Tibial artery (tissue), 4 donors: ENCODE measurements at regions of chr5 and their contacts with region 1.

Region 1: GRCh38 chr5:89673019-89673418 is 736.5 kb downstream of the CETN3 start:
- DNase-seq: no peak
- H3K4me3 ChIP-seq: no peak overlapping the region
- H3K27ac ChIP-seq: no peak overlapping the region
- H3K4me1 ChIP-seq: peaks cover 0 to 6% (median 0%) of the 10 kb centered on the region in 4 donors
- H3K27me3 ChIP-seq: no peaks in the 10 kb centered on the region
- CTCF ChIP-seq: no peak

Region 2: DNA sequence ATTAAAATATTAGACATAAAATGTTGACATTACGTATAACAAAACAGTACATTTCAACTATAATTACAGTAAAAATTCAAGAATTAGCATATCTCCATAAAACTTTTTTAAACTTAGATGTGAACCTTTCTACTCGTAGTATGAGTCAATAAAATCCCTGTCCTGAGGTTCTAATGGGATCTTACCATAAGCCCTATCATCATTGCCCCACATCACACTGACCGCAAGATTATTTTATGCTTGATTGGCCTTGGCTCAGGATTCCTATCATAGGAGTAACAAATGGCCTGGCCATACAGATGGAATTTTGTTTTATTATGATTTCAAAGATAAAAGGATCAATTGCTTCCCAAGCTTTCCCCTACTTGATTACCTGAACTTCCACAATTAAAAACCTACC is 1028.3 kb before region 1 on chr5:
- intact Hi-C with region 1: no loop called
- DNase-seq: no peak
- H3K4me3 ChIP-seq: no peak overlapping the region
- H3K27ac ChIP-seq: no peak overlapping the region
- H3K4me1 ChIP-seq: no peaks in the 10 kb centered on the region
- H3K27me3 ChIP-seq: no peaks in the 10 kb centered on the region
- CTCF ChIP-seq: no peak

Region 3: GRCh38 chr5:91245871-91246270 is 1572.9 kb after region 1 on chr5:
- intact Hi-C with region 1: loop called (anchors 5 kb)
- DNase-seq: no peak
- H3K4me3 ChIP-seq: no peak overlapping the region
- H3K27ac ChIP-seq: no peak overlapping the region
- H3K4me1 ChIP-seq: no peaks in the 10 kb centered on the region
- H3K27me3 ChIP-seq: no peaks in the 10 kb centered on the region
- CTCF ChIP-seq: no peak